Activated naive CD4-positive, alpha-beta T cell treated with anti-CD3 and anti-CD28 coated beads for 36 hours (primary cell): ENCODE measurements at regions of chr15 and their contacts with region 1.

Region 1: DNA sequence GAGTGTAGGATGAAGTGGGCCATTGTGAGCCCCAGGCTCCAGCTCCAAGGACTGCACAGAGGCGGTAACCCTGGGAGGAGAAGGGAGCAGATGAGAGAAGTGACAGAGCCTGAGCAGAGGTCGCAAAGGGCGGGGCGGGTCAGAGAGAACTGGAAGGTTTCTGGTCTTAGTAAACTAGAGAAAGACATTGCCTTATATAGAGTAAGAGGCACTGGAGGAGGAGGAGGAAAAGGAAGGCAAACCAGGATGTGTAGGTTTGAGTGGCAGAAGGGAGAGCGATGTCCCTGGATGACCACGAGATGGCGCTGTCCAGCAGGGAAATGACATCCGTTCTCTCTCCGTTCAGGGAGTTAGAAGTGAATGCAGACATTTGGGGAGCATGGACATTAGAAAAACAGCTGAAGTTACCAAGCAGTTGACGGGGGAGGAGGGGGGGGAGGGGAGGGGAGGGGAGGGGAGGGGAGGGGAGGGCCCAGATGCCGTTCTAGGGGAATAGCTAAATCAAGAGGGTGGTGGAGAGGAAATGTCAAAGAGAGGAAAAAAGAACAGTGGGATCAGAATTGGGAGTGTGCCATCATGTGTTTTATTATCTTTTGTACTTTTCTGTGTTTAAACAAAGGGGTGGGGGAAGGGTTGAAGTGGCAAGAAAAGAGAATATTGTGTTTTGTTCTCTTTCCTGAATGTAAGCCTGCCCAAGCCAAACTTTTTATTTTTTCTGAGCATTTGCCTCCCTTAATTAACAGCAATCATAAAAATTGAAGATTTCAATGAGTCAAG is 48.8 kb downstream of the STARD5 start:
- DNase-seq: peak; percentile 94
- H3K4me3 Mint-ChIP-seq: no peak overlapping the region
- H3K27ac Mint-ChIP-seq: peak overlapping the region; percentile 56
- H3K4me1 Mint-ChIP-seq: peaks cover 51% of the 10 kb centered on the region
- H3K27me3 Mint-ChIP-seq: no peaks in the 10 kb centered on the region

Region 2: DNA sequence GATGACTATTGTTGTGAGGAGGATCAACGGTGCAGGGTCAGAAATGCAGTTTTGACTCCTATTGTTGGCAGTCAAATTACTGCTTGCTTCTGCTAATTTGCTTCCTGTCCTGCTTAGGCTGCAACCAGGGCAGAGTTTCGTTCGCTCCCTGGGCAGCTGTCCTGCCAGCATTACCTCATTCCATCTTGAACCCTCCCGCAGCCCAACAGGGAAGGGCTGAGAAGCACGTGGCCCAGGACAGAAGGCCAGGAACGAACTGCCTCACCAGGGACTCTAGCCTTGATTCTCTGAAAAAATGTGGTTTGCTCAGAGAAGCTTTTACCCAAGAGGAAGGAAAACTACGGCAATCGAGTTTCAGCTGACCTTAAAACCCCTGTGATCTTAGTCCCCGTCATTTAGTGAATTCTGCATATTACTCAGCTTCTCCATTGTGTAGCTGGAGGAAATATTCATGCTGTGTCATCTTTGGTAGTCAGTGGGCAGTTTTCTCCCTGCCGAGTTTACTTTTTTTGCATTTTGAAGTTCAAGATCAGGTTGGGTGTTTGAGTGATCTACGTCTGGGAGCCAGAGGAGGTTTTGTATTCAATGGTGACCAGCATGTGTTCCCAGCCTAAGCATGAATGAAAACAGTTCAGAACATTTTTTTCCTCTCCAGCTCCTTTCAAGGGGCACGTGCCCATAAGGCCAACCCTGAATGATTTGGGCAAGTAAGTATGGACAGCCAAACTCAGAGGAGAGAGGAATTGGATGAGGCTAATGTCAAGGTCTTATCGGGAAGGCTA is 251.4 kb before region 1 on chr15:
- CTCF ChIA-PET with region 1: no interaction called
- intact Hi-C with region 1: no loop called
- DNase-seq: peak; percentile 39
- H3K4me3 Mint-ChIP-seq: peak overlapping the region; percentile 20
- H3K27ac Mint-ChIP-seq: peak overlapping the region; percentile 64
- H3K4me1 Mint-ChIP-seq: peaks cover 24% of the 10 kb centered on the region
- H3K27me3 Mint-ChIP-seq: no peaks in the 10 kb centered on the region

Region 3: DNA sequence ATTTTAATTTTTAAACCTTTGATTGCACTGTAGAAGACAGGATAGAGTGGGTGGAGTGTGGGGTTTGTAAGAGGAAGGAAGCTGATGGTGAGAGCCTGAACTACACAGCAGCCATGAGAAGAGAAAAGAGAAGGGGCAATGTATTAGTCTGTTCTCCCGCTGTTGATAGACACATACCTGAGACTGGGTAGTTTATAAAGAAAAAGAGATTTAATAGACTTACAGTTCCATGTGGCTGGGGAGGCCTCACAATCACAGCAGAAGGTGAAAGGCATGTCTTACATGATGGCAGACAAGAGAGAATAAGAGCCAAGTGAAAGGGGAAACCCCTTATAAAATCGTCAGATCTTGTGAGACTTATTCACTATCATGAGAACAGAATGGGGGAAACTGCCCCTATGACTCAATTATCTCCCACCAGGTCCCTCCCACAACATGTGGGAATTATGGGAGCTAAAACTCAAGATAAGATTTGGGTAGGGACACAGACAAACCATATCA is 11.6 kb after region 1 on chr15:
- CTCF ChIA-PET with region 1: interaction called, 23 read pairs
- intact Hi-C with region 1: no loop called
- DNase-seq: peak; percentile 52
- H3K4me3 Mint-ChIP-seq: peak overlapping the region; percentile 75
- H3K27ac Mint-ChIP-seq: peak overlapping the region; percentile 95
- H3K4me1 Mint-ChIP-seq: peaks cover 83% of the 10 kb centered on the region
- H3K27me3 Mint-ChIP-seq: no peaks in the 10 kb centered on the region

Region 4: GRCh38 chr15:81301815-81302399 is 26.8 kb after region 1 on chr15:
- CTCF ChIA-PET with region 1: interaction called, 43 read pairs
- intact Hi-C with region 1: no loop called
- DNase-seq: peak; percentile 69
- H3K4me3 Mint-ChIP-seq: peak overlapping the region; percentile 93
- H3K27ac Mint-ChIP-seq: peak overlapping the region; percentile 99
- H3K4me1 Mint-ChIP-seq: peaks cover 64% of the 10 kb centered on the region
- H3K27me3 Mint-ChIP-seq: no peaks in the 10 kb centered on the region

Region 5: DNA sequence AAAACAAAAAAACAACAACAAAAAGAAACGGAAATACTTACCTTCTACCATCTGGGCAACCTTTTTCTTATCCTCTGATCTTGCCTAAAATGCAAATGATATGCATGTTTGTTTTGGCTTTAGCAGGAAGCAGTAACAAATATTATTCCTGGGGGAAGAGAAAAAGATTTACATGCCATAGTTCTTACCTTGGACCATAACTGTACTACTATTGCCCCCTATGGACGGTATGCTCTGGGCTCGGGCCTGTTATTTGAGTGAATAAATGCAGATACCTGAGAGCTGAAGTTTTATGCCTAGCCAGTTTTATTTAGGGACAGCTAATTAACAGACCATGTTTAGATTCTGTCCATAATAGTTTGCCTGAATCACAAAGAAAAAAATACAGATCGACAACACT is 61.4 kb after region 1 on chr15:
- CTCF ChIA-PET with region 1: interaction called, 65 read pairs
- intact Hi-C with region 1: loop called (anchors 1 kb)
- DNase-seq: peak; percentile 69
- H3K4me3 Mint-ChIP-seq: no peak overlapping the region
- H3K27ac Mint-ChIP-seq: no peak overlapping the region
- H3K4me1 Mint-ChIP-seq: peaks cover 15% of the 10 kb centered on the region
- H3K27me3 Mint-ChIP-seq: no peaks in the 10 kb centered on the region

Region 6: DNA sequence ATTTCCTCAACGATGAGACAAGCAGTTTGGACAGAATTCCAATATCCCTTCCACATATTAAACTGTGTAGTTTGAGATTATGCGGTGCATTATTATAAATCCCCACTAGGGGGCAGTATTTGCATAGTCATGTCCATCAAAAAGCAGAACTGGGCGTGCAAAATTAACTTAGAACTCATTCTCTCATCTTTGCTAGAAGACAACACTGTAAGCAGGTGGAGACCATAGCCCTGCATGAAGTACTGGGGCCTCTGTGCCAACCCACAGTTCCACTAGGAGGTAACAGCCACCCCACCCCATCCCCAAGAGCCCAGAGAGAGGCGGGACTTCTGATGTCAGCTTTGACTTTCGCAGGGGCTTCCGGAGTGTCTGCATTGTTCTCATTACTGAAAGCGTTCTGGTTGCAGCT is 205.5 kb after region 1 on chr15:
- CTCF ChIA-PET with region 1: no interaction called
- intact Hi-C with region 1: loop called (anchors 10 kb)
- DNase-seq: peak; percentile 8
- H3K4me3 Mint-ChIP-seq: no peak overlapping the region
- H3K27ac Mint-ChIP-seq: no peak overlapping the region
- H3K4me1 Mint-ChIP-seq: no peaks in the 10 kb centered on the region
- H3K27me3 Mint-ChIP-seq: peaks cover 2% of the 10 kb centered on the region